ENCODE measurements at regions of chr22 and their contacts with region 1.

Region 1: DNA sequence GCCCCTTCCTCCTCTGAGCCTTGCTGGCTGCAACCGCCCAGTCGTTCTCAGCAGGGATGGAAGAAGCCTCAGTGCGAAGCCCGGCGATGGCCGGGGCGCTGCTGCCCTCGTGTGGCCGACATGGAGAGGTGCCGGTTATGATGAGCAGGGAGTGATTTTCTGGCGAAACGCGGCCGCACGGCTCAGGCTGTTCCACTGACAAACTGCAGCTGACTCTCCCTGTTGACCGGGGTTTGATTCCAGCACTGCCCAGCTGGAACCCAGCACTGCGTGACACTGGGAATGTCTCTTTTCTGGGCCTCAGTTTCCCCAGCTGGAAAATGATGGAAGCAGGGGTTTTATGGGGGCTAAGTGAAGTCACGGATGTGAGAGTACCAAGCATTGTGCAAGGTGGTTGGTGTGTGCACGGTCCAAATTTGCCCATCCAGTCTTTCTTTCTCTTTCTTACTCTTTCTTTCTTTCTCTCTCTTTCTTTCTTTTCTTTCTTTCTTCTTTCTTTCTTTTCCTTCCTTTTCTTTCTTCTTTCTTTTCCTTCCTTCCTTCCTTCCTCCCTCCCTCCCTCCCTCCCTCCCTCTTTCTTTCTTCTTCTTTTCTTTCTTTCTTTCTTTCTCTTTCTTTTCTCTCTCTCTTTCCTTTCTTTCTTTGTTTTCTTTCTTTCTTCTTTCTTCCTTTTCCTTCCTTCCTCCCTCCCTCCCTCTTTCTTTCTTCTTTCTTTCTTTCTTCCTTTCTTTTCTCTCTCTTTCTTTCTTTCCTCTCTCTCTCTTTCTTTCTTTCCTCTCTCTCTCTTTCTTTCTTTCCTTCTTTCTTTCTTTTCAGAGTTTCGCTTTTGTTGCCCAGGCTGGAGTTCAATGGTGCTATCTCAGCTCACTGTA is 25.8 kb upstream of the MPPED1 start:
- DNase-seq: peak; percentile 81 to 94
- ATAC-seq: peak; percentile 93
- H3K4me3 ChIP-seq: no peak overlapping the region
- H3K27ac ChIP-seq: no peak overlapping the region
- H3K4me1 ChIP-seq: no peaks in the 10 kb centered on the region
- H3K27me3 ChIP-seq: peaks cover 0 to 2% of the 10 kb centered on the region in 2 donors

Region 2: GRCh38 chr22:43230971-43231723 is 154.9 kb before region 1 on chr22:
- intact Hi-C with region 1: loop called (anchors 2 to 5 kb)
- DNase-seq: no peak
- ATAC-seq: no peak
- H3K4me3 ChIP-seq: no peak overlapping the region
- H3K27ac ChIP-seq: no peak overlapping the region
- H3K4me1 ChIP-seq: no peaks in the 10 kb centered on the region
- H3K27me3 ChIP-seq: no peaks in the 10 kb centered on the region

Region 3: GRCh38 chr22:43273902-43274484 is 112.0 kb before region 1 on chr22:
- intact Hi-C with region 1: loop called (anchors 1 to 5 kb)
- DNase-seq: no peak
- ATAC-seq: no peak
- H3K4me3 ChIP-seq: no peak overlapping the region
- H3K27ac ChIP-seq: no peak overlapping the region
- H3K4me1 ChIP-seq: no peaks in the 10 kb centered on the region
- H3K27me3 ChIP-seq: no peaks in the 10 kb centered on the region

Region 4: GRCh38 chr22:44625981-44626687 is 1240.1 kb after region 1 on chr22:
- intact Hi-C with region 1: loop called in 1 of 2 experiments (anchors 5 kb)
- DNase-seq: peak; percentile 78 to 88
- ATAC-seq: peak; percentile 79
- H3K4me3 ChIP-seq: no peak overlapping the region
- H3K27ac ChIP-seq: no peak overlapping the region
- H3K4me1 ChIP-seq: no peaks in the 10 kb centered on the region
- H3K27me3 ChIP-seq: no peaks in the 10 kb centered on the region